ENCODE measurements at regions of chr2 and their contacts with region 1.

Region 1: GRCh38 chr2:177164584-177165052 is 48.0 kb upstream of the HNRNPA3 start:
- DNase-seq: peak; percentile 65 to 85 (median 72)
- H3K4me3 ChIP-seq: peak overlapping the region; percentile 47
- H3K4me3 Mint-ChIP-seq: no peak overlapping the region
- H3K27ac ChIP-seq: peak overlapping the region; percentile 32
- H3K27ac Mint-ChIP-seq: no peak overlapping the region
- H3K4me1 ChIP-seq: peaks cover 18% of the 10 kb centered on the region
- H3K4me1 Mint-ChIP-seq: peaks cover 6 to 16% (median 16%) of the 10 kb centered on the region in 3 donors
- H3K27me3 ChIP-seq: no peaks in the 10 kb centered on the region
- H3K27me3 Mint-ChIP-seq: peaks cover 0 to 2% of the 10 kb centered on the region in 2 donors

Region 2: GRCh38 chr2:177148477-177149154 is 16.0 kb before region 1 on chr2:
- CTCF ChIA-PET with region 1: interaction called, 43 read pairs
- POLR2A ChIA-PET with region 1: no interaction called
- DNase-seq: peak; percentile 60 to 78 (median 63)
- H3K4me3 ChIP-seq: peak overlapping the region; percentile 71
- H3K4me3 Mint-ChIP-seq: peak overlapping the region; percentile 70 to 92 (median 89)
- H3K27ac ChIP-seq: no peak overlapping the region
- H3K27ac Mint-ChIP-seq: peak overlapping the region in 7 of 8 donors; percentile 14 to 82 (median 67)
- H3K4me1 ChIP-seq: peaks cover 9% of the 10 kb centered on the region
- H3K4me1 Mint-ChIP-seq: peaks cover 9 to 19% (median 18%) of the 10 kb centered on the region in 3 donors
- H3K27me3 ChIP-seq: peaks cover 29% of the 10 kb centered on the region
- H3K27me3 Mint-ChIP-seq: peaks cover 13 to 29% of the 10 kb centered on the region in 2 donors

Region 3: DNA sequence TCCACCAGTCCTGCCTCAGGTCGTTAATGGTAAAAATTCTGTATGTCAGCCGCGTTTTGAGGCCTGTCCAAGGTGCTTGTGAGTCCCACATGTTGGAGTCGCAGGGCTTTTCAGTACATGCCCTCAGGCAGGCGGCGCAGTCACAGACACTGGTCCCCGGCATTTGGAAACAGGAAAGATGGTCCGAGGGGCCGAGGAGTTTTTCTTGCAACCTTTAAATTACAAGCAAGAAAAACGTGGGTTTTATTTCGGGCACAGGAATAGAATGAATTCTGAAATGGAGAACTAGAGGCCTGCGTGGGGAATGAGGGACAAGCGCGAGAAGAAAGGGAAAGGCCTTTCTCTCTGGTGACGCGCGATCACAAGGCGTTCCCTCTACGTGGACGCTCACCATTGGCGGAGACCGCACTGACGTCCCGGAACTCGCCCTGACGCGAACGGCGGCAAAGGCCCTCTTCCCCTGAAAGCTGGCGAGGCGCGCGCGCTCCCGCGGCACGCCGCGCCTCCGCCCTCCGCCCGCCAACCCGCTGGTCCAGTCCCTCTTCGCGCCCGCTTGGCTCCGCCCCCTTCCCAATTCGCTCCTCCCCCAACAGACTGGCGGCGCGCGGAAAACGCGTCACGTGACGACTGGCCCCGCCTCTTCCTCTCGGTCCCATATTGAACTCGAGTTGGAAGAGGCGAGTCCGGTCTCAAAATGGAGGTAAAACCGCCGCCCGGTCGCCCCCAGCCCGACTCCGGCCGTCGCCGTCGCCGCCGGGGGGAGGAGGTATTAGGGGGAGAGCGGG is 47.7 kb after region 1 on chr2 and contains the start of gene HNRNPA3:
- CTCF ChIA-PET with region 1: interaction called, 12 read pairs
- POLR2A ChIA-PET with region 1: interaction called, 23 read pairs
- DNase-seq: peak; percentile 99 to 100 (median 100)
- H3K4me3 ChIP-seq: peak within 1 kb of the TSS; percentile 98
- H3K4me3 Mint-ChIP-seq: peak within 1 kb of the TSS; percentile 91 to 99 (median 93)
- H3K27ac ChIP-seq: peak within 1 kb of the TSS; percentile 100
- H3K27ac Mint-ChIP-seq: peak within 1 kb of the TSS; percentile 99 to 100 (median 100)
- H3K4me1 ChIP-seq: peaks cover 51% of the 10 kb centered on the region
- H3K4me1 Mint-ChIP-seq: peaks cover 49 to 58% (median 57%) of the 10 kb centered on the region in 3 donors
- H3K27me3 ChIP-seq: no peaks in the 10 kb centered on the region
- H3K27me3 Mint-ChIP-seq: peaks cover 0 to 10% of the 10 kb centered on the region in 2 donors
- total RNA-seq, gene HNRNPA3: 203 to 216 TPM

Region 4: DNA sequence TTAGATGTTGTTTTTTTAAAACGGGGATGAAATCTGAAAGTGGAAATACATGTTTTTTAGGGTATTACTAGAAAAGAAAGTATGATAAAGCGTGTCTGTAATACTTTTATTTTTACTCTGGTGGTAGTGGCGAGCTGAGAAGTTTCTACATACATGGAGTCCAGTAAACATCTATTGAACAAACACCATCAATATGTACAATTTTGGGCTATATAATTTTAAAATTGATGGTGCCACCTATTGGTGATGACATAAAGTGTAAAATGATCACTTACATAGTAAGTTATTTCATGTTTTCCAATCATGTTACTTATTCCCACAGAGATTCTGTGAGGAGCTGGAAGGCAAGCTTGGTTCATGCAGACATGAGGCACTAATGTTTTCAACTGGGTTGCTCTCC is 131.4 kb after region 1 on chr2:
- CTCF ChIA-PET with region 1: interaction called, 79 read pairs
- POLR2A ChIA-PET with region 1: no interaction called
- DNase-seq: peak in 2 of 5 donors; percentile 21 to 33
- H3K4me3 ChIP-seq: no peak overlapping the region
- H3K4me3 Mint-ChIP-seq: no peak overlapping the region
- H3K27ac ChIP-seq: no peak overlapping the region
- H3K27ac Mint-ChIP-seq: no peak overlapping the region
- H3K4me1 ChIP-seq: no peaks in the 10 kb centered on the region
- H3K4me1 Mint-ChIP-seq: peaks cover 3 to 7% (median 5%) of the 10 kb centered on the region in 3 donors
- H3K27me3 ChIP-seq: no peaks in the 10 kb centered on the region
- H3K27me3 Mint-ChIP-seq: peaks cover 0 to 5% of the 10 kb centered on the region in 2 donors

Region 5: GRCh38 chr2:177338177-177338721 is 173.6 kb after region 1 on chr2:
- CTCF ChIA-PET with region 1: interaction called, 103 read pairs
- POLR2A ChIA-PET with region 1: no interaction called
- DNase-seq: no peak
- H3K4me3 ChIP-seq: no peak overlapping the region
- H3K4me3 Mint-ChIP-seq: no peak overlapping the region
- H3K27ac ChIP-seq: no peak overlapping the region
- H3K27ac Mint-ChIP-seq: no peak overlapping the region
- H3K4me1 ChIP-seq: no peaks in the 10 kb centered on the region
- H3K4me1 Mint-ChIP-seq: no peaks in the 10 kb centered on the region
- H3K27me3 ChIP-seq: no peaks in the 10 kb centered on the region
- H3K27me3 Mint-ChIP-seq: no peaks in the 10 kb centered on the region

Region 6: GRCh38 chr2:177604271-177605065 is 439.9 kb after region 1 on chr2:
- CTCF ChIA-PET with region 1: interaction called, 10 read pairs
- POLR2A ChIA-PET with region 1: no interaction called
- DNase-seq: no peak
- H3K4me3 ChIP-seq: no peak overlapping the region
- H3K4me3 Mint-ChIP-seq: no peak overlapping the region
- H3K27ac ChIP-seq: no peak overlapping the region
- H3K27ac Mint-ChIP-seq: no peak overlapping the region
- H3K4me1 ChIP-seq: no peaks in the 10 kb centered on the region
- H3K4me1 Mint-ChIP-seq: no peaks in the 10 kb centered on the region
- H3K27me3 ChIP-seq: no peaks in the 10 kb centered on the region
- H3K27me3 Mint-ChIP-seq: peaks cover 5 to 26% of the 10 kb centered on the region in 2 donors